Naive thymus-derived CD4-positive, alpha-beta T cell (primary cell): ENCODE measurements at regions of chr16 and their contacts with region 1.

Region 1: GRCh38 chr16:27235055-27235937 is 32.0 kb downstream of the KDM8 start:
- DNase-seq: peak; percentile 61 to 97 (median 96)
- ATAC-seq: peak; percentile 82
- H3K4me3 ChIP-seq: peak overlapping the region; percentile 29
- H3K4me3 Mint-ChIP-seq: peak overlapping the region; percentile 77 to 88 (median 84)
- H3K27ac ChIP-seq: peak overlapping the region; percentile 97
- H3K27ac Mint-ChIP-seq: peak overlapping the region; percentile 91 to 100 (median 99)
- H3K4me1 ChIP-seq: peaks cover 82 to 84% of the 10 kb centered on the region in 2 donors
- H3K4me1 Mint-ChIP-seq: peaks cover 70 to 98% (median 90%) of the 10 kb centered on the region in 7 donors
- H3K27me3 ChIP-seq: no peaks in the 10 kb centered on the region
- H3K27me3 Mint-ChIP-seq: no peaks in the 10 kb centered on the region

Region 2: GRCh38 chr16:26905336-26905735 is 330.0 kb before region 1 on chr16:
- CTCF ChIA-PET with region 1: no interaction called
- POLR2A ChIA-PET with region 1: no interaction called
- intact Hi-C with region 1: no loop called
- DNase-seq: no peak
- ATAC-seq: no peak
- H3K4me3 ChIP-seq: no peak overlapping the region
- H3K4me3 Mint-ChIP-seq: no peak overlapping the region
- H3K27ac ChIP-seq: no peak overlapping the region
- H3K27ac Mint-ChIP-seq: no peak overlapping the region
- H3K4me1 ChIP-seq: no peaks in the 10 kb centered on the region
- H3K4me1 Mint-ChIP-seq: peaks cover 0 to 1% (median 0%) of the 10 kb centered on the region in 7 donors
- H3K27me3 ChIP-seq: no peaks in the 10 kb centered on the region
- H3K27me3 Mint-ChIP-seq: peaks cover 0 to 50% (median 29%) of the 10 kb centered on the region in 5 donors

Region 3: DNA sequence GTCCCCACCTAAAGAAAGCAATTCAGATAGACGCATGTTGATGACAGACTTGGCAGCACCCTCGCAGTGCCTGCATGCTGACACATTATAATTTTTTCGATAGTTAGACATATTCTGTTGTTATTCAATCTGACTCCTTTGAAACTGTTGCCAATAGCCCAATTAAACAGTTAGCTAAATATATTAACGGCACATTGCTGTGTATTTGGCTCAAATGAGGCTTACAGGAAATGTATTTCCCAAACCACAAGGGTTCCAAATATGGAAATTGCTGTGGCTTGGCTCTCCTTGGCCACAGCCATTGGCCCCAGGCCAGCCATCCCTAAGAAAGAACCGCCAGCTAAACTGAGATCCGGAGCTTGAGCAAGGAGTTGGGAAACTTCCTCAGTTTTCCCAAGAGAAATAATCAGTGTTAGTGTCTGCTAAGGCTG is 137.5 kb before region 1 on chr16:
- CTCF ChIA-PET with region 1: no interaction called
- POLR2A ChIA-PET with region 1: no interaction called
- intact Hi-C with region 1: no loop called
- DNase-seq: no peak
- ATAC-seq: no peak
- H3K4me3 ChIP-seq: no peak overlapping the region
- H3K4me3 Mint-ChIP-seq: no peak overlapping the region
- H3K27ac ChIP-seq: no peak overlapping the region
- H3K27ac Mint-ChIP-seq: no peak overlapping the region
- H3K4me1 ChIP-seq: no peaks in the 10 kb centered on the region
- H3K4me1 Mint-ChIP-seq: no peaks in the 10 kb centered on the region
- H3K27me3 ChIP-seq: no peaks in the 10 kb centered on the region
- H3K27me3 Mint-ChIP-seq: peaks cover 4 to 26% (median 18%) of the 10 kb centered on the region in 5 donors

Region 4: DNA sequence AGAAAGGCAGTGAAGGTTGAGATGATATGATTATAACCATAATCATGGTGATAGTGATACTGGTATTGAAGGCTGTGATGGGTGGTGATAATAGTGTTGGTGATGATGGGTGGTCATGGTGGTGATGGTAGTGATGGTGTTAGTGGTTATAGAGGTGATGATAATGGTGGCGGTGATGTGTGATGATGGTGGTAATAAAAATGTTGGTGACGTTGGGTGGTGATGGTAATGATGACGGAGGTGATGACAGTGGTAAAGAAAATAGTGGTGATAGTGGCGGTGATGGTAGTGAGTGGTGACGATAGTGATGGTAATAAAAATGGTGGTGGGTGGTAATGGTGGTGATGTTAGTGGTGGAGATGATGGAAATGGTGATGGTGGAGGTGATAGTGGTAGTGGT is 97.0 kb before region 1 on chr16:
- CTCF ChIA-PET with region 1: no interaction called
- POLR2A ChIA-PET with region 1: no interaction called
- intact Hi-C with region 1: no loop called
- DNase-seq: no peak
- ATAC-seq: peak; percentile 8
- H3K4me3 ChIP-seq: no peak overlapping the region
- H3K4me3 Mint-ChIP-seq: peak overlapping the region in 2 of 10 donors; percentile 0 to 10
- H3K27ac ChIP-seq: no peak overlapping the region
- H3K27ac Mint-ChIP-seq: peak overlapping the region; percentile 3 to 90 (median 65)
- H3K4me1 ChIP-seq: no peaks in the 10 kb centered on the region
- H3K4me1 Mint-ChIP-seq: peaks cover 0 to 10% (median 7%) of the 10 kb centered on the region in 7 donors
- H3K27me3 ChIP-seq: peaks cover 0 to 4% of the 10 kb centered on the region in 2 donors
- H3K27me3 Mint-ChIP-seq: peaks cover 0 to 10% (median 5%) of the 10 kb centered on the region in 5 donors

Region 5: GRCh38 chr16:27169511-27170071 is 65.7 kb before region 1 on chr16:
- CTCF ChIA-PET with region 1: interaction called, 12 read pairs
- POLR2A ChIA-PET with region 1: interaction called, 95 read pairs
- intact Hi-C with region 1: loop called in 1 of 2 experiments (anchors 1 kb)
- DNase-seq: peak; percentile 32 to 92 (median 88)
- ATAC-seq: peak; percentile 94
- H3K4me3 ChIP-seq: peak overlapping the region; percentile 7
- H3K4me3 Mint-ChIP-seq: peak overlapping the region; percentile 38 to 78 (median 70)
- H3K27ac ChIP-seq: peak overlapping the region; percentile 64
- H3K27ac Mint-ChIP-seq: peak overlapping the region; percentile 67 to 96 (median 91)
- H3K4me1 ChIP-seq: peaks cover 53 to 60% of the 10 kb centered on the region in 2 donors
- H3K4me1 Mint-ChIP-seq: peaks cover 38 to 78% (median 74%) of the 10 kb centered on the region in 7 donors
- H3K27me3 ChIP-seq: no peaks in the 10 kb centered on the region
- H3K27me3 Mint-ChIP-seq: peaks cover 0 to 3% (median 0%) of the 10 kb centered on the region in 5 donors

Region 6: DNA sequence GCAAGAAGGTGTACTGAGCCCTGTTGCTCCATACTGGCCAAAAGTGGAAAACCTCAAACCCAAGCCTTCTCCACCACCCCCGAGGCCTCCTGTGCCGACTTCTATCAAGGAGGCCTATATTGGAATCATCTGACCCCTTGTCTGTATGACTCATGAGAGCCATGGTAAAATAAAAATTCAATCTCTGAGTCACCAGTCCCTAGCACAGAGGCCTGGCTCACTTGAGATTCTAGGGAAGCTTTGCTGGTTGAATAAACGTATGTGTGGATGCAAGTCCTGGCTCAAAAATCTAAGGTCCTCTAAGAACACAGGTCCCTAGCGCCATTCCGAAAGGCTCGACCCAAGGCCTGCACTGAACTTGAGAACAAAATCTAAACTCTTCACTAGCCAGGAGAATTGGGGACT is 18.2 kb after region 1 on chr16:
- CTCF ChIA-PET with region 1: interaction called, 6 read pairs
- POLR2A ChIA-PET with region 1: interaction called, 142 read pairs
- intact Hi-C with region 1: loop called (anchors 1 kb)
- DNase-seq: peak in 1 of 9 donors; percentile 41
- ATAC-seq: no peak
- H3K4me3 ChIP-seq: peak overlapping the region; percentile 11
- H3K4me3 Mint-ChIP-seq: peak overlapping the region in 9 of 10 donors; percentile 54 to 76 (median 65)
- H3K27ac ChIP-seq: peak overlapping the region; percentile 47
- H3K27ac Mint-ChIP-seq: peak overlapping the region; percentile 49 to 95 (median 85)
- H3K4me1 ChIP-seq: peaks cover 4 to 31% of the 10 kb centered on the region in 2 donors
- H3K4me1 Mint-ChIP-seq: peaks cover 40 to 81% (median 77%) of the 10 kb centered on the region in 7 donors
- H3K27me3 ChIP-seq: no peaks in the 10 kb centered on the region
- H3K27me3 Mint-ChIP-seq: no peaks in the 10 kb centered on the region

Region 7: DNA sequence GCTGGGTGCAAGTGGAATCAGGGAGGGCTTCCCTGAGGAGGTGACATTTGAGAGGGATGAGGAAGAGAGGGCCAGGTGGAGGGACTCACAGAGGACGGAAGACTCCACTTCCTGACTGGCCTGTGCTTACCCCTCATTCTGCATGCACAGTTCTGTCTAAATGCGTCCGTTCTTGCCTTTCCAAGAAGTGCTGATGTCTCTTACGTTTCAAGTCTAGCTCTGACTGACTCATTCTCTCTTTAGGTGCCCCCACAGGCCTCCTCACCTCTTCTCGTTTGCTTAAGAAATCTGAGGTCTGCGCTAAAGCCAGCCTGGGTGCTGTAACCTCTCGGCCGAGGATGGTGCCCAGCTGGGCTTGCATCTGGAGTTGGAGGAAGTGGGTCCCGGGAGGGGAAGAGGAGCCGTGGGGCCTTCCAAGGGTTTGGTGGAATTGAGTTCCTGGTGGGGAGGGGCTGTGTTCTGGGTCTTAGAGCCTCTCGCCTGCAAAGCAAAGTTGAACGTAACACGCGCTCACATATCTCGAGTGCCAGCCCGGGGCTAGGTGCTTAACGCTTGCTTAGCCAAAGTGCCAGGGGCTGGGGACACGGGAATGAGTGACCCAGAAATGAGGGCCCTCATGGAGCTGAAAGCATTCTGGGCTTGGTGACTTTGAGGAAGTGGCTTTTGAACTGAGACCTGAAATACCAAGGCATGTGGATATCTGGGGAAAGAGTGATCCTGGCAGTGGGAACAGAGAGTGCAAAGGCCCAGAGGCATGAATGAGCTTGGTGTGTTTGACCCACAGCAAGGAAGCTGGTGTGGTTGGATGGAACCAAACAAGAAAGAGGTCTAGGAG is 83.3 kb after region 1 on chr16:
- CTCF ChIA-PET with region 1: interaction called, 107 read pairs
- POLR2A ChIA-PET with region 1: interaction called, 139 read pairs
- intact Hi-C with region 1: loop called (anchors 1 kb)
- DNase-seq: peak; percentile 22 to 77 (median 52)
- ATAC-seq: peak; percentile 61
- H3K4me3 ChIP-seq: peak overlapping the region; percentile 63
- H3K4me3 Mint-ChIP-seq: peak overlapping the region; percentile 85 to 99 (median 97)
- H3K27ac ChIP-seq: peak overlapping the region; percentile 99
- H3K27ac Mint-ChIP-seq: peak overlapping the region; percentile 92 to 99 (median 95)
- H3K4me1 ChIP-seq: peaks cover 37 to 43% of the 10 kb centered on the region in 2 donors
- H3K4me1 Mint-ChIP-seq: peaks cover 67 to 85% (median 75%) of the 10 kb centered on the region in 7 donors
- H3K27me3 ChIP-seq: no peaks in the 10 kb centered on the region
- H3K27me3 Mint-ChIP-seq: no peaks in the 10 kb centered on the region

Region 8: DNA sequence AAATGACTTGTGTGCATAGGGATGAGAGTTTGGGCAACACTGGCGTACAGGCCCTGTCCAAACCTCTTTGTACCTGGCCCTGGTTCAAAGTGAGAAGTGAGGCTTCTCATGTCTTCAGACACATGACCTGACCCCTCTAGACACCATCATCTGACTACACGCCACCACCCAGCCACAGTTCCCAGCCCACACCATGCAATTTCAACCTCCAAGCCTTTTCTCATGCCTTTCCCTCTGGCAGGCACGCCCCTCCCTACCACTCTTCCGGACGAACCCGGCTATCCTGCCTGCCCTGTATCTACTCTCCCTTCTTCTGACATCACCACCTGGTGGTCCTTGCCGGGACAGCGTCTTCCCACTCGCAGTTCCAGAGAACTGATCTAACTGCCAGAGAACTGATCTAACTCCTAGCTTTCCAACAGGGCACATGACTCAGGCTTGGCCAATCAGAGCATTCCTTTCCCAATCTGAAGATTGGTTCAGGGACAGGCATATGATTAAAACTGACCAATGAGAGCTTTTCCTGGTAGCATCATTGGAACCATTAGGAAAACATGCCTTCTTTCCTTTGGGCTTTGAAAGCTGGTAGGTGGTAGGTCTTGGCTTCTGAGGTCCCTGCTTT is 139.6 kb after region 1 on chr16:
- CTCF ChIA-PET with region 1: interaction called, 10 read pairs
- POLR2A ChIA-PET with region 1: interaction called, 196 read pairs
- intact Hi-C with region 1: no loop called
- DNase-seq: peak in 1 of 9 donors; percentile 50
- ATAC-seq: peak; percentile 64
- H3K4me3 ChIP-seq: no peak overlapping the region
- H3K4me3 Mint-ChIP-seq: no peak overlapping the region
- H3K27ac ChIP-seq: peak overlapping the region; percentile 53
- H3K27ac Mint-ChIP-seq: no peak overlapping the region
- H3K4me1 ChIP-seq: peaks cover 32 to 71% of the 10 kb centered on the region in 2 donors
- H3K4me1 Mint-ChIP-seq: peaks cover 29 to 53% (median 45%) of the 10 kb centered on the region in 7 donors
- H3K27me3 ChIP-seq: no peaks in the 10 kb centered on the region
- H3K27me3 Mint-ChIP-seq: no peaks in the 10 kb centered on the region

Region 9: DNA sequence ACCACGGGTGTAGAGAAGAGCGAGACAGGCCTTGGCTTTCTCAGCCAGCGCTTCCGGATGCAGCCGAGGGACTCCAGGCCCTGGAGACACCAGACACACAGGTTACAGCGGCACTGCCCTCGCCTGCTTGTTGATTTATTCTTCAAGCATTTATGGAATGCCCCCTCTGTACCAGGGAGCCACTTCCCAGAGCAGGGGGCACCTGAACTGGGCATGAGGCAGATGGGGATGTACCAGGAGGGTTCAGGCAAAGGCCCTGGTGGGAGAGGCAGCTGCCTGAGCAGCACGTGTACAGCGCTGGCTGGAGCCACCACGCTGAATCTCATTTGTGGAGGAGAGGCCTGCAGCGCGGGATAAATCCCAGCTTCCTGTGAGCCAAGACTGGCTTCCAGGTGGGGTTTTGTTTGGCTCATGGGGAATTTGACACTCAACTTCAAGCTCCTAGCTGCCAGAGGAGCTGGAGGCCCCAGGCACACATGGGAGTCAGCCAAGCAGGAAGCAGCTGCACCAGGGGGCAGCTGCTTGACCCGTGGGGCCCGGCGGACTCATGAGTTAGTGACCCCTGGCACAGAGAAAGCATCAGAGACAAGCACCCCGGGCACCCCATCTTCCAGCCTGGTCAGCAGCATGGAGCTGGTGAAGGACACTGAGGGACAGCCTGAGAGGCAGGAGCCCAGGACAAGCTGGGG is 226.3 kb after region 1 on chr16:
- CTCF ChIA-PET with region 1: interaction called, 22 read pairs
- POLR2A ChIA-PET with region 1: interaction called, 12 read pairs
- intact Hi-C with region 1: loop called (anchors 1 kb)
- DNase-seq: no peak
- ATAC-seq: no peak
- H3K4me3 ChIP-seq: no peak overlapping the region
- H3K4me3 Mint-ChIP-seq: no peak overlapping the region
- H3K27ac ChIP-seq: no peak overlapping the region
- H3K27ac Mint-ChIP-seq: peak overlapping the region in 8 of 9 donors; percentile 16 to 64 (median 44)
- H3K4me1 ChIP-seq: peaks cover 40 to 60% of the 10 kb centered on the region in 2 donors
- H3K4me1 Mint-ChIP-seq: peaks cover 24 to 75% (median 39%) of the 10 kb centered on the region in 7 donors
- H3K27me3 ChIP-seq: no peaks in the 10 kb centered on the region
- H3K27me3 Mint-ChIP-seq: no peaks in the 10 kb centered on the region